ENCODE measurements at regions of chr14 and their contacts with region 1.

Region 1: GRCh38 chr14:73795972-73796371 is 55.7 kb upstream of the PTGR2 start:
- DNase-seq: peak; percentile 62
- H3K4me3 ChIP-seq: no peak overlapping the region
- CTCF ChIP-seq: no peak

Region 2: GRCh38 chr14:73842851-73843250 is 46.9 kb after region 1 on chr14:
- in situ Hi-C with region 1: loop called (anchors 5 kb)
- DNase-seq: no peak
- H3K4me3 ChIP-seq: no peak overlapping the region
- CTCF ChIP-seq: no peak